AG04450 (cell line): ENCODE measurements at regions of chr7 and their contacts with region 1.

Region 1: DNA sequence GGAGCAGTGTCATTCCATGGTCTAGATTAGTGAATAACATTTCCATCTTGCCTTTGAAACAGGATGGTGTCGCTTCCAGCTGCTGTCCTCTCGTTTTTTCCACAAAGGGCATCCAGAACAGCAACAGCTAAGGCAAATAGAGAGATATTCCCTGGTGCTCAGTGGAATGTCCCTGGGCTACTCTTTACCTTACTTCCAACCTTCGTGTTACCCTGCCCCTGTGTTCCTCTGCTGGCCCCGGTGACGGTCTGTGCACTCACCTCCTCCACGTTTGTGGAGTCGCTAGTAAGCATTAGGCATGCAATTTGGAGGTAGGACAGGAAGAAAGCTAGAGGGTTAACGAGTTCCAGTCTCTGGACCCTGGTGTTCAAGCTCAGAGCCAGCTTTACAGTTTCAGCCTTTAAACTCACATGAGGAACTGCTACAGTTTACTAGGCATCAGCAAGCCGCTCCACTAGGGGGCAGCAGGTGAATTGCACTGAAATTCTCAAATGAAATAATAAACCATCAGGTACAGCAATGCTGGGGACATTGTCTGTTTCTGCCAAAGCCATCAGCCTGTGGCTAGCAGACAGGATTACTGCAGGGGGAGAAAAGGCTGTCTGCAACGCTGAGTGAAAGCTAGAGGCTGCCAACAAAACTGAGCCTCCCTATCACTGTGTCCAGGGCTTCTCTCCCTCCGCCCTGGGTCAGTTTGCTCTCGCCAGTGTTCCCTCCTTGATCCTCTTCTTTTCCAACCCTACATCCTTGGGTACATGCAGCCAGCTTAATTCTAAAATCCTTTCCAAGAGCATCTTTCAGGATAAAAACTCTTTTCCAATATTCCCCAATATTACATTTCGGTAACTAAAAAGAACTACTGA is 9.0 kb downstream of the MRPL32 start:
- DNase-seq: peak; percentile 41
- H3K4me3 ChIP-seq: no peak overlapping the region
- H3K27ac ChIP-seq: no peak overlapping the region
- H3K27me3 ChIP-seq: no peaks in the 10 kb centered on the region
- CTCF ChIP-seq: peak; percentile 95

Region 2: GRCh38 chr7:42770106-42770505 is 171.1 kb before region 1 on chr7:
- CTCF ChIA-PET with region 1: no interaction called
- POLR2A ChIA-PET with region 1: no interaction called
- DNase-seq: no peak
- H3K4me3 ChIP-seq: no peak overlapping the region
- H3K27ac ChIP-seq: no peak overlapping the region
- H3K27me3 ChIP-seq: no peaks in the 10 kb centered on the region
- CTCF ChIP-seq: no peak

Region 3: GRCh38 chr7:42961170-42961569 is 20.0 kb after region 1 on chr7:
- CTCF ChIA-PET with region 1: interaction called, 14 read pairs
- POLR2A ChIA-PET with region 1: no interaction called
- DNase-seq: no peak
- H3K4me3 ChIP-seq: no peak overlapping the region
- H3K27ac ChIP-seq: no peak overlapping the region
- H3K27me3 ChIP-seq: peaks cover 5% of the 10 kb centered on the region
- CTCF ChIP-seq: no peak

Region 4: DNA sequence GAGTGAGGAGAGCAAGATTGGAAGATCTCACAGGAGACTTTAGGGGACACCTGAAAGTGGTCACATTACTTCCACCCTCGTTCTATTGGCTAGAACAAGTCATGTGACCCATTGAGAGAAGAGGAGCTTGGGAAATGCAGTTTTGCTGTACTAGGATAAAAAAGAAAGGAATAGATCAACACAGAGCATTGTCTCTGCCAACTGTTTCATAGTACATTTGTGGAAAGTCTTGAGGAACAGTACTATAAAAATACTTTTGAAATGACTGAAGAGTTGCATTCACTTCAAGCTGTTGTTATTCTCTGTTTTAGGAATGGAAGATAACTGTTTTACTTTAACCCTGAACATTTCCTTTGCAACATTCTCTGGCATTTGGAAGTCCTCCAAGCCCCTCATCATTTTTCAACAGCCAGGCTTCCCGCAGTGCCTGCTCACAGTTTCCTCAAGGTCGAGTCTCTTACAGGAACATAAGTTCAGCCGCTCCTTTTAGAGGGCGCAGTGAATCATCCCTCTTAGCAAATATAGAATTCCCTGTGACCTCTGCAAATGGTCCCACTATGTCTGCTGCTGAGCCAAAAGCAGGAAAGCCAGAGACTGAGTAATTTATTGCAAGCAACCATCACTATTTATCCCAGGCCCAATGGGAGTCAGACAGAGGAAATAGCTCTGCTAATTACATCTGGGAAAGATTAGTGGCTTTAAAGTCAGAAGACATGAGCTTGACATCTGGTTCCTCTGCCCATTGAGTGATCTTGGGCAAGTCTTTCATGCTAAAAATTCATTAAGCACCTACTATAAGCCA is 31.7 kb after region 1 on chr7:
- CTCF ChIA-PET with region 1: interaction called, 10 read pairs
- POLR2A ChIA-PET with region 1: no interaction called
- DNase-seq: peak; percentile 55
- H3K4me3 ChIP-seq: no peak overlapping the region
- H3K27ac ChIP-seq: peak overlapping the region; percentile 54
- H3K27me3 ChIP-seq: peaks cover 8% of the 10 kb centered on the region
- CTCF ChIP-seq: no peak

Region 5: DNA sequence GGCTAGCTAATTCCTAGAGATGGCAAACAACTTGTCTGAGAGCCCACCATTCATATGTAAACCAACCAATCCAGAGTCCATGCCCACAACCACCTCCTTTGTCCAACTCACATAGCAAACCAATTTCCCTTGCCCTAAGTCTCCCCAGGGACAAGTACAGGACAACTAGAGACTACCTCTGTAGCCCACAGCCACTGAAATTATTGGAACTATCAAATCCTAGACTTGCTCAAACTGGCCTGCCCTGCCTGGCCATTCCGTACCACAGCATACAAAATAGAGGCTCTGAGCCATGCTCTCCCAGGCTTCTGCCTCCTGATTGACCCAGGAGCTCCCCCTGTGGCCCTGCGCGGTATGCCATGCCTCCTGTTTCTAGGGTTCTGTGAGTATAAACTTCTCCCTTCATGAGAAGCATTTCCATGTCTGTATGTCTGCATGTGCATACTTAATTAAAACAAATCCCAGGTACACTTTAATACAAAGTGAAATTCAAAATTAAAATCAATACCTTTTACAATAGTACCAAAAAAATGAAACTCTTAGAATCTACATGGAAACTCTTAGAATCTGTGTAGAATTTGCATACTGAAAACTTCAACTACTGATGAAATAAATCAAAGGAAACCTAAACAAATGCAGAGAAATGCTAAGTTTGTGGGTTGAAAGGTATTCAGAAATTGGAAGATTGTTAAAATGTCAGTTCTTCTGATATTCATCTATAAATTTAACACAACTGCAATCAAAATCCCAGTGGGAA is 167.2 kb after region 1 on chr7:
- CTCF ChIA-PET with region 1: interaction called, 19 read pairs
- POLR2A ChIA-PET with region 1: no interaction called
- DNase-seq: no peak
- H3K4me3 ChIP-seq: no peak overlapping the region
- H3K27ac ChIP-seq: no peak overlapping the region
- H3K27me3 ChIP-seq: peaks cover 33% of the 10 kb centered on the region
- CTCF ChIP-seq: peak; percentile 97

Region 6: DNA sequence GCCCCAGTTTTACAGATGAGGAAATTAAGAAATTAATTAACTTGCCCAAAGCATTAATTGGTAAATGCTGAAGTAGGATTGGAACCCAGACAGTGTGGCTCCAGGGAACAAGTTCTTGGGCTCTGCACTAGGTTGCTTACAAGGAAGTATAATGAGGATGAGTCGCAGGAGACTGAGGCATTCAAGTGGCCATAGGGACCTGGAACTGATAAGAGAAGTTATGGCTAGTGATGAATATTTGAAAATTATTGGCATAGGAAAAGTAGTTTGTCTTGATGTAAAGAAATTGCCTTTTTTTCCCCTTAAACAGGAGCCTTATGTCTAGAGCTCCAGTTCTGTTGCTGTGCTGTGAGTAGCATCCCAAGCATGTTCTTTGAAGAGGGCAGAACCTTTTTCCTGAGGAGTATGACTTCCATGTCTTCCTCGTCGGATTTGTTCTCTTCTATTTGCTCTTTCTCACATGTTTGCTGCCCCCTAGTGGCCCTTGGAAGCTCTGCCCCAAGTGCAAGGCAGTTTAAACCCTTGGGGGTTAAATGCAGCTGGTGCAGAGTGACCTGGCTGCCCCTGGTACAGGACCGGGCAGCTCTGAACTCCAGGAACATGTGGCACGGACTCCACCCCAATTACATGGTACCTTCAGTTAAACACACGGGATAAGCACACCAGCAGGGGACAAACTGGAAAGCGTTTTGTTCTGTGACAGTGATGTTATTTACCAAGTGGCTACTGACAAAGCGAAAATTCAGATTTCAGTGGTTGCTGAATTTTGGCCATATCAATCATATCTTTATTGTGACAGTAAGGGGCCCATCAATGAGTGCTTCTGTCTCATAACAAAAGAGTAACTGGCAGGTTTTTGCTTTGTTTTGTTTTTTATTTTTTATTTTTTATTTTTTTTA is 320.0 kb after region 1 on chr7:
- CTCF ChIA-PET with region 1: interaction called, 85 read pairs
- POLR2A ChIA-PET with region 1: no interaction called
- DNase-seq: peak; percentile 72
- H3K4me3 ChIP-seq: no peak overlapping the region
- H3K27ac ChIP-seq: no peak overlapping the region
- H3K27me3 ChIP-seq: no peaks in the 10 kb centered on the region
- CTCF ChIP-seq: peak; percentile 96

Region 7: GRCh38 chr7:43439631-43440401 is 498.6 kb after region 1 on chr7:
- CTCF ChIA-PET with region 1: interaction called, 23 read pairs
- POLR2A ChIA-PET with region 1: no interaction called
- DNase-seq: no peak
- H3K4me3 ChIP-seq: no peak overlapping the region
- H3K27ac ChIP-seq: no peak overlapping the region
- H3K27me3 ChIP-seq: no peaks in the 10 kb centered on the region
- CTCF ChIP-seq: peak; percentile 77

Region 8: GRCh38 chr7:43454936-43455518 is 513.8 kb after region 1 on chr7:
- CTCF ChIA-PET with region 1: interaction called, 41 read pairs
- POLR2A ChIA-PET with region 1: no interaction called
- DNase-seq: no peak
- H3K4me3 ChIP-seq: no peak overlapping the region
- H3K27ac ChIP-seq: no peak overlapping the region
- H3K27me3 ChIP-seq: no peaks in the 10 kb centered on the region
- CTCF ChIP-seq: peak; percentile 60